ENCODE measurements at regions of chr6 and their contacts with region 1.

Region 1: DNA sequence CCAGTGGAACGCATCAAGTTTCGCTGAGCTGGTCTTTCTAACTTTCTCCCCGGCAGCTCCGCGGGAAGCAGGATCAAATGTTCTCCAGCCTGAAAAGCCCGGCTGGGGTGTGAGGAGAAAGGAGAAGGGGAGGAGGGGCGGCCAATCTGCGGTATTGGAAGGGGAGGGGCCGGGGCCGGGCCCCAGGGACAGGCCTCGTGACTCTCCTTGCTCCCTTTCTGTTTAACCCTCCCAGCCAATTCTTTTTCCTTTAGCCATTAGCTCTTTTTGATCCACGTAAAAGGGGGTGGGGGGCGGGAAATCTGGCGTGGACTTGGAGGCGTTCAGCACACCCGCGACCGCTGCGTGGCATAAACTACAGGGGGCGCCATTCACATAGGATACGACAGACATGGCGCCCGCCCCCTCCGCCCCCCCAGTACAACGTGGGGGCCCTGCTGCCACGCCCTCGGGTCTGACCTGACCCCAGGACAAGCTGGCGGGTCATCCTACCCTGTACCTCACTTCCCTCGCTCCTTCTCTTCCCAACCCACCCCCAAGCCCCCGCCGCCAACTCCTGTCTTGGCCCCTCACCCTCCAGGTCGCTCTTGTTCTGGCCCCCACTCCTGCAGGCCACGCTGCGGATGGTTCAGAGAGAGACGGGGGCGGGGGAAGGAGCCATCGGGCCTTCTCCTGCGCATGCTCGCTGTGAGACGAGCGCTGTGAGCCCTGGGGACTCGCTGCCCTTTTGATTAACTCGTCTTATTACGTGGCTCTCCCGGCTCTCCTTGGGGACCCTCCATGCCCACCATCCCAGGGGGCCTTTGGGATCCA is 7.8 kb upstream of the MDGA1 start:
- DNase-seq: peak; percentile 84
- H3K4me3 Mint-ChIP-seq: peak overlapping the region; percentile 76
- H3K27ac Mint-ChIP-seq: peak overlapping the region; percentile 46
- H3K4me1 Mint-ChIP-seq: peaks cover 9% of the 10 kb centered on the region
- H3K27me3 Mint-ChIP-seq: peaks cover 16% of the 10 kb centered on the region

Region 2: DNA sequence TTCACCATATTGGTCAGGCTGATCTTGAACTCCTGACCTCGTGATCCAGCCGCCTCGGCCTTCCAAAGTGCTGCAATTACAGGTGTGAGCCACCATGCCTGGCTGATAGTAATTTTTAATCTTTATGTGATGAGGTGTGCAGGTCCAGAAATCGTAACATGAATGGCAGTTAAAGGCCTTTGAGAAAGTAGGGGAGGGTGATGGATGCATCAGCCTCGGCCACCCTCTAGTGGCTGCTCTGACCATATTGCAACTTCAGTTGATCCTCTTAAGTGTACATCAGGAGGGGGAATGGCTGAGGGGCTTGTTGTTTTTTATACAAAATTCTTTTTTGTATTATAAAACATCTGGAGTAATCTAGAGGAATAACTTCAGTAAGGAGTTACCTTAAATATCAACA is 307.1 kb after region 1 on chr6:
- intact Hi-C with region 1: loop called (anchors 10 kb)
- DNase-seq: peak; percentile 58
- H3K4me3 Mint-ChIP-seq: no peak overlapping the region
- H3K27ac Mint-ChIP-seq: no peak overlapping the region
- H3K4me1 Mint-ChIP-seq: peaks cover 6% of the 10 kb centered on the region
- H3K27me3 Mint-ChIP-seq: no peaks in the 10 kb centered on the region